WTC11 (cell line): ENCODE measurements at regions of chr4 and their contacts with region 1.

Region 1: GRCh38 chr4:5460116-5460801 is 248.1 kb downstream of the EVC2 start:
- DNase-seq: peak; percentile 66
- ATAC-seq: peak; percentile 83
- H3K4me3 Mint-ChIP-seq: no peak overlapping the region
- H3K27ac Mint-ChIP-seq: no peak overlapping the region
- H3K4me1 Mint-ChIP-seq: peaks cover 8% of the 10 kb centered on the region
- H3K27me3 Mint-ChIP-seq: no peaks in the 10 kb centered on the region; the same call in 1 of the 2 replicates
- CTCF ChIP-seq: peak; percentile 51; the same call in 1 of the 2 replicates

Region 2: DNA sequence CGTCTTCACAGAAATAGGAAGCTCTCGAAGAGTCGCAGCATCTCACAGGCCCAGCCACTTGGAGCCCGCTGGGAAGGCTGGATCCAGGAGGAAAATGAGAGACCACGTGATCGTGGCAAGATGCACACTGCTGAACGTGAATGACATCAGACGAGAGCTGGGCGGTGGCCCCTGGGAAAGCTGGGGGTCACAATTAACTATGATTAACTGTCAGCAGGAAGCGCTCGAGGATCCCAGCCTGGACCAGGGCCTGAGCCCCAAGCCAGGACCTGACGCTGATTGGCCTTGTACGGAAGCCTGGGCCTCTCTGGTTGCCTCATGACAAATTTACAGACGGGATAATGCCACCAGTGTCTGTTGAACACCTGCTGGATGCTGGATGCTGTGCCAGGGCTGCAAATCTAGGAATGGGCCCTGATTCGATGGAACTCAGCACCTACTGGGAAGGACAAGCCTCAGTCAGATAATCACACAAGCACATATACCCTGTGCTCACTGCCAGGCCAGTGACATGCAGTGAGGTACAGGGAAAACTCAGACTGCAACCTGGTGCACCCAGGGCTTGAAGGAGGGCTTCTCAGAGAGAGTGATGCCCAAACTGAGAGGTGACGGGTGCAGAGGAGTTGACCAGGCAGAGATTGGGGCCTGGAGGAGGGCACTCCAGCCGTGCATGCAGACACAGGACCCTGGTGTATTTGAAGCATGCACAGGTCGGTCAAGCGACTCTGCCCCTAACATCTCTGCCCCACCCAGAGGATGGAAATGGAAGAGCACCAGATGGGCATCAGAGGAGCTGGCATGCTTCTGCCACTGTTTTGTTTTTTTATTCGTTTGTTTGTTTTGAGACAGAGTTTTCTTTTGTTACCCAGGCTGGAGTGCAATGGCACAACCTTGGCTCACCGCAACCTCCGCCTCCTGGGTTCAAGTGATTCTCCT is 73.1 kb before region 1 on chr4:
- CTCF ChIA-PET with region 1: interaction called, 10 read pairs
- POLR2A ChIA-PET with region 1: no interaction called
- DNase-seq: no peak
- ATAC-seq: peak; percentile 72
- H3K4me3 Mint-ChIP-seq: no peak overlapping the region
- H3K27ac Mint-ChIP-seq: no peak overlapping the region
- H3K4me1 Mint-ChIP-seq: no peaks in the 10 kb centered on the region
- H3K27me3 Mint-ChIP-seq: peaks cover 5% of the 10 kb centered on the region; the same call in 1 of the 2 replicates
- CTCF ChIP-seq: no peak

Region 3: DNA sequence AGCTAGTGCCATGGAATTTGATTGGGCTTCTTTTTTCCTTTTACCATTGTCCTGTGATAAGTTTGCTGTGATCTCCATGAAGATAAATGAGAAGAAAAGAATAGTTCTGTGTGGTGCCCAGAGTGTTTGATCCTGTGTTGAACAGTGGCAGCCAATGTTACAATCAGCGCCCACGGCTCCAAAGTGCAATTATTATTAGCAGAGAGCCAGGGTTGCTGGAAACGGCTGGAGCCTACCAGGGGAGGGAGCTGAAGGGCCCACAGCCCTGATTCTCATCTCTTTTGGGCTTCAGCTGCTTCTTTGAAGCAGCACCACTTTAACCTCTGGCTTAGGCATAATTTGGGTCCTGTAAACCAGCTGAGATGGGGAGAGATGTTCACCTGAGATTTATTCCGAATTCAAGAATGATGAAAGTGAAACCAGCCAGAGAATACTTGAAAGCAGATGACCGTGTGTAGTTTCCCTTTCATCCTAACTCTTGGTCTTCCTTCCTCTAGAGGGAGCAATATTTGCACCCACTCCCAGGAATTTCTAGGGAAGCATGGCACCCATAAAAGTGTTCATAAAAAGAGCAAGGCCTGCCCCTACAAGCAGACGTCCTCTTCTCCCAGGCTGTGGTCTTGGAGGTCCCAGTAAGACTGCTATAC is 50.2 kb before region 1 on chr4:
- CTCF ChIA-PET with region 1: interaction called, 27 read pairs
- POLR2A ChIA-PET with region 1: no interaction called
- DNase-seq: no peak
- ATAC-seq: peak; percentile 43; the same call in 1 of the 2 replicates
- H3K4me3 Mint-ChIP-seq: no peak overlapping the region
- H3K27ac Mint-ChIP-seq: no peak overlapping the region
- H3K4me1 Mint-ChIP-seq: no peaks in the 10 kb centered on the region
- H3K27me3 Mint-ChIP-seq: peaks cover 12% of the 10 kb centered on the region; the same call in 1 of the 2 replicates
- CTCF ChIP-seq: no peak

Region 4: DNA sequence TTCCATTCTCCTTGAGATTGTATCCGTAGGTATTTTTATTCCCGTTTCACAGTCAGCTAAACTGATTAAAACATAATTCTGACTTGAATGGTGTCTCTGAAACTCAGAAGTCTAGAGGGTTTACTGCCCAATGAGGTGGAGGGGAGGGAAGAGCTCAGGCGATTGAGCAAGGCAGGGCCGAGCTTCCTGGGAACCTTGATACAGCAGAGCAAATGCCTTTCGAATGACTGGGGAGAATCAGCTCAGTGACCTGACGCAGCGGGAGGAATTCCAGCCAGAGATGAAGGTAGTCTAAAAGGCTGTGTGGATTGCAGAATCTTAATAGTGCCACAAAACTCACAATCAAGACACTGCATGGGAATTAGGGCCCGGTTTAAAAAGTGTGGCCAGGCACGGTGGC is 14.5 kb after region 1 on chr4:
- CTCF ChIA-PET with region 1: no interaction called
- POLR2A ChIA-PET with region 1: no interaction called
- DNase-seq: no peak
- ATAC-seq: no peak
- H3K4me3 Mint-ChIP-seq: no peak overlapping the region
- H3K27ac Mint-ChIP-seq: no peak overlapping the region
- H3K4me1 Mint-ChIP-seq: peaks cover 16% of the 10 kb centered on the region
- H3K27me3 Mint-ChIP-seq: no peaks in the 10 kb centered on the region
- CTCF ChIP-seq: no peak